ENCODE measurements at regions of chr6 and their contacts with region 1.

Region 1: GRCh38 chr6:159654483-159655098 is 38.5 kb downstream of the SOD2 start:
- DNase-seq: peak; percentile 68
- H3K4me3 Mint-ChIP-seq: no peak overlapping the region
- H3K27ac Mint-ChIP-seq: no peak overlapping the region
- H3K4me1 Mint-ChIP-seq: no peaks in the 10 kb centered on the region
- H3K27me3 Mint-ChIP-seq: peaks cover 11% of the 10 kb centered on the region

Region 2: DNA sequence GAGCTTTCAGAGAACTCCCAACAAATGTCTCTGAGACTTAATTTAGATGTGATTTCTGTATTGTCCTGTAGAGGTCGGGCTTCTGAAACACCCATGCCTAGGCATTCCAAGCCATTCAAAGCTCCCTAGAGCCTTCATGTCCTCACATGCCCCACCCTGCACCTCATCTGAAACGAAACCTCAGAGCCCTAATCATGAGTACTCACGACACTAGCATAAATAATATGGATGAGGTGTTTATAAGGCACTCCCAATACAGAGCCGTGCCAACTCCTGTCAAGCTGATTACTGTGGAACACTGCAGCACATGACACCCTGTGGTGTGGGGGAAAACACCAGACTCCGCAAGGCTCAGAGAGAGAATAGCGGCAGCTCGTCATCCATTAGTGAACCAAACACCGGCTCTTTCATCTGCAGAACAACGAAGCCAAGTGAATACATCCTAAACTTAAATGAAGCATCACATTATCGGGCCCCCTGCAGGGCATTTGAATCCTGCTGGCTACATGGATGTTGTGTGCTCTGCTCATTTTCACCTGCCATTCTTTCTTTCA is 401.6 kb before region 1 on chr6:
- intact Hi-C with region 1: loop called (anchors 1 kb)
- DNase-seq: peak; percentile 65
- H3K4me3 Mint-ChIP-seq: no peak overlapping the region
- H3K27ac Mint-ChIP-seq: no peak overlapping the region
- H3K4me1 Mint-ChIP-seq: no peaks in the 10 kb centered on the region
- H3K27me3 Mint-ChIP-seq: no peaks in the 10 kb centered on the region

Measured in activated CD4-positive, alpha-beta T cell treated with anti-CD3 and anti-CD28 coated beads, Interleukin-2, amount 10 ng/mL, durations not matched to agents 24 days and 14 days (primary cell).